Esophagus muscularis mucosa (tissue), 4 donors: ENCODE measurements at regions of chr18 and their contacts with region 1.

Region 1: GRCh38 chr18:48663931-48664847 is 125.4 kb downstream of the CTIF start:
- DNase-seq: no peak
- H3K4me3 ChIP-seq: no peak overlapping the region
- H3K27ac ChIP-seq: peak overlapping the region in 3 of 4 donors; percentile 9 to 41 (median 29)
- H3K4me1 ChIP-seq: peaks cover 14 to 54% (median 42%) of the 10 kb centered on the region in 4 donors
- H3K27me3 ChIP-seq: no peaks in the 10 kb centered on the region
- CTCF ChIP-seq: peak; percentile 87 to 96 (median 93)
- EP300 ChIP-seq: no peak
- POLR2A ChIP-seq: no peak

Region 2: GRCh38 chr18:48475635-48476549 is 188.3 kb before region 1 on chr18:
- intact Hi-C with region 1: loop called (anchors 1 kb)
- DNase-seq: peak; percentile 92
- H3K4me3 ChIP-seq: no peak overlapping the region
- H3K27ac ChIP-seq: no peak overlapping the region
- H3K4me1 ChIP-seq: peaks cover 0 to 7% (median 2%) of the 10 kb centered on the region in 4 donors
- H3K27me3 ChIP-seq: no peaks in the 10 kb centered on the region
- CTCF ChIP-seq: peak; percentile 81 to 92 (median 91)
- EP300 ChIP-seq: no peak
- POLR2A ChIP-seq: no peak

Region 3: DNA sequence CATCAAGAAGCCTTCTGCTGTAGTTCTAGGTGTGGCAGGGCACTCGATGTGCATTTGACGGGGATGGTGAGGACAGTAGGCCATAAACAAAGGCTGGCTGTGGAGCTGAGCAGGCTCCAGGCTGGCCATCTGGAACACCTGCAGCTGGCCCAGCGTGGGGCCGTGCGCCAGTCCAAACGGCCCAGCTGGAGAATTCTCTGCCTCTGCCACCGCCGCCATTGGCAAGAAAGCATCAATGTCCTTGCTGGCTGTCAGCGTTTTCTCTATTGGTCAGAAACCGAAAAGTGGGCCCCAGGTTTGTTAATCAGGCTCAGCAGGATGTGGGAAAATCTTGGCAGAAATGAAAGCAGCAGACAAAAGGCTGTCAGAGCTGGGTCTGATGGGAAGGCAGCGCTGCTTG is 149.4 kb before region 1 on chr18:
- intact Hi-C with region 1: no loop called
- DNase-seq: no peak
- H3K4me3 ChIP-seq: no peak overlapping the region
- H3K27ac ChIP-seq: no peak overlapping the region
- H3K4me1 ChIP-seq: no peaks in the 10 kb centered on the region
- H3K27me3 ChIP-seq: no peaks in the 10 kb centered on the region
- CTCF ChIP-seq: no peak
- EP300 ChIP-seq: no peak
- POLR2A ChIP-seq: no peak

Region 4: GRCh38 chr18:48545757-48546321 is 118.3 kb before region 1 on chr18:
- intact Hi-C with region 1: loop called (anchors 5 kb)
- DNase-seq: no peak
- H3K4me3 ChIP-seq: peak overlapping the region in 1 of 4 donors; percentile 1
- H3K27ac ChIP-seq: peak overlapping the region; percentile 80 to 88 (median 82)
- H3K4me1 ChIP-seq: peaks cover 84 to 96% (median 91%) of the 10 kb centered on the region in 4 donors
- H3K27me3 ChIP-seq: no peaks in the 10 kb centered on the region
- CTCF ChIP-seq: no peak
- EP300 ChIP-seq: no peak
- POLR2A ChIP-seq: no peak